ENCODE measurements at regions of chr1 and their contacts with region 1.

Region 1: GRCh38 chr1:16946646-16947045 is 24.9 kb downstream of the CROCC start:
- DNase-seq: no peak
- H3K4me3 ChIP-seq: no peak overlapping the region
- H3K4me3 Mint-ChIP-seq: no peak overlapping the region
- H3K27ac ChIP-seq: no peak overlapping the region
- H3K27ac Mint-ChIP-seq: no peak overlapping the region
- H3K4me1 ChIP-seq: peaks cover under 1% of the 10 kb centered on the region
- H3K4me1 Mint-ChIP-seq: peaks cover 0 to 3% (median under 1%) of the 10 kb centered on the region in 4 donors
- H3K27me3 ChIP-seq: no peaks in the 10 kb centered on the region
- H3K27me3 Mint-ChIP-seq: no peaks in the 10 kb centered on the region

Region 2: GRCh38 chr1:16621300-16621658 is 325.4 kb before region 1 on chr1:
- CTCF ChIA-PET with region 1: interaction called, 26 read pairs
- POLR2A ChIA-PET with region 1: no interaction called
- intact Hi-C with region 1: loop called (anchors 1 kb)
- DNase-seq: no peak
- H3K4me3 ChIP-seq: no peak overlapping the region
- H3K4me3 Mint-ChIP-seq: no peak overlapping the region
- H3K27ac ChIP-seq: no peak overlapping the region
- H3K27ac Mint-ChIP-seq: no peak overlapping the region
- H3K4me1 ChIP-seq: no peaks in the 10 kb centered on the region
- H3K4me1 Mint-ChIP-seq: peaks cover 0 to 3% (median 0%) of the 10 kb centered on the region in 4 donors
- H3K27me3 ChIP-seq: no peaks in the 10 kb centered on the region
- H3K27me3 Mint-ChIP-seq: no peaks in the 10 kb centered on the region

Region 3: DNA sequence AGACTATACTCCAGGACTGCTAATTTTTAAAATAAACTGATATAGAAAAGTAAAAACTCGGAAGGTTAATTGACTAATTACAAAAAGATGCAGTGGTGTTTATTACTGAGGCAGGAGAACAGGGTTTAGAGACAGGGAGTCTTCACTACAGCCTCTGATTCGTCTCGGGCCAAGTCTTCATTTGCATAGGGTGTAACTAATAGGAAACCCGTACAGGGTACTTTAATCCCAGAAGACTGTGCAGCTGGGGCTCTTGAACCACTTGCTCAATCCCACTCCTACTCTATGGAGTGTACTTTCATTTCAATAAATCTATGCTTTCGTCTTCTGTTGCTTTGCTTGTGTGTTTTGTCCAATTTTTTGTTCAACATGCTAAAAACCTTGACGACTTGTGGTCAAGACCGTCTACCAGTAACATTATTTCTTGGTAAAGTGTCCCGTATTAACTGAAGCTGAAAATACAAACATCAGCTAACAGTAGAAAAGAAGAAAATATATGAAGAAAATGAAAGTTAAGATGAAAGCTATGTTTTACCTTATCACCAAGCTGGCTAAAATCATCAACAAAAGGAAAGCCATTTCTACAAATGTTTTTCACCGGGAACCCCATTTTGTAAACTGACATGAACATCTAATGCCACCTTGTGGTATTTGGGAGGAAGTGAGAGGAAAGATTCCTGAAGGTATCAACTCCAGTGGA is 99.1 kb after region 1 on chr1:
- CTCF ChIA-PET with region 1: interaction called, 35 read pairs
- POLR2A ChIA-PET with region 1: no interaction called
- intact Hi-C with region 1: loop called (anchors 1 kb)
- DNase-seq: peak in 4 of 5 donors; percentile 29 to 39 (median 35)
- H3K4me3 ChIP-seq: no peak overlapping the region
- H3K4me3 Mint-ChIP-seq: peak overlapping the region in 3 of 8 donors; percentile 36 to 64 (median 46)
- H3K27ac ChIP-seq: no peak overlapping the region
- H3K27ac Mint-ChIP-seq: peak overlapping the region in 5 of 7 donors; percentile 51 to 86 (median 81)
- H3K4me1 ChIP-seq: peaks cover 5% of the 10 kb centered on the region
- H3K4me1 Mint-ChIP-seq: peaks cover 13 to 21% (median 16%) of the 10 kb centered on the region in 4 donors
- H3K27me3 ChIP-seq: no peaks in the 10 kb centered on the region
- H3K27me3 Mint-ChIP-seq: no peaks in the 10 kb centered on the region

Region 4: DNA sequence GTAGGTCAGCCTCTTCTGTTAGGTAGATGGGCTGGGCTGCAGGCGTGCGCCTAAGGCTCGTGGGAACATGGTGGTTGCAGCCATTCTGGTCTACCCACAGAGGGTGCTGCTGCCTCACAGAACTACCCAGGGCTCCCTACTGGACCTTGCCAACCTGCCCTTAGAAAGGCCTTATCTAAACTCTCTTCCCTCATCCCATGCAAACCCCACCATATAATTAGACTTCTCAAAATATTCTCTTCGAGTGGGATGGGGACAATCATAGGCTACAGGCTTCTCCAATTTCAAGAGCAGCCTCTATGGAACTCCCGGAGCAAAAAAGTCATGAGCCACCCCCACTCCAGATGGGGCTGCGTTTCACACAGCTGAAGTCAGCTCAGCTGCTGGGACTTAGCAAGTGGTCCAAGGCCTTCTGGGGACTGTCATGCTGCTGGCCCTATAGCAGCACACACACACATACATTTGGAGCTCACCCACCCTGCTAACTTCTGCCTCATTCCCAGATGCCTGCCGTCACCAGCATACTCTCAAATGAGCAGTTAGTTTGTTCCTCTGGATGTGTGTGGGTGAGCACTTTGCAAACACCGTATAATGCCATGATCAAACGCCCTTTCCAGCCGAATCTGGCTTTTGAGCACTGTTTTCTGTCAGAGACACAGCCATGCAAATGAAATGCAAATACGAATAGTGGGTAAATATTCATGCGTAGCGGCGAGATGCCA is 113.3 kb after region 1 on chr1:
- CTCF ChIA-PET with region 1: no interaction called
- POLR2A ChIA-PET with region 1: no interaction called
- intact Hi-C with region 1: no loop called
- DNase-seq: peak in 4 of 5 donors; percentile 24 to 40 (median 30)
- H3K4me3 ChIP-seq: no peak overlapping the region
- H3K4me3 Mint-ChIP-seq: no peak overlapping the region
- H3K27ac ChIP-seq: no peak overlapping the region
- H3K27ac Mint-ChIP-seq: peak overlapping the region in 1 of 7 donors; percentile 8
- H3K4me1 ChIP-seq: no peaks in the 10 kb centered on the region
- H3K4me1 Mint-ChIP-seq: peaks cover 0 to 4% (median 0%) of the 10 kb centered on the region in 4 donors
- H3K27me3 ChIP-seq: no peaks in the 10 kb centered on the region
- H3K27me3 Mint-ChIP-seq: peaks cover 5 to 6% of the 10 kb centered on the region in 2 donors

Region 5: GRCh38 chr1:17236779-17237560 is 290.3 kb after region 1 on chr1:
- CTCF ChIA-PET with region 1: interaction called, 4 read pairs
- POLR2A ChIA-PET with region 1: no interaction called
- intact Hi-C with region 1: loop called (anchors 2 kb)
- DNase-seq: peak; percentile 69 to 79 (median 74)
- H3K4me3 ChIP-seq: no peak overlapping the region
- H3K4me3 Mint-ChIP-seq: no peak overlapping the region
- H3K27ac ChIP-seq: no peak overlapping the region
- H3K27ac Mint-ChIP-seq: peak overlapping the region in 1 of 7 donors; percentile 73
- H3K4me1 ChIP-seq: no peaks in the 10 kb centered on the region
- H3K4me1 Mint-ChIP-seq: peaks cover 0 to 9% (median 0%) of the 10 kb centered on the region in 4 donors
- H3K27me3 ChIP-seq: no peaks in the 10 kb centered on the region
- H3K27me3 Mint-ChIP-seq: peaks cover 2 to 3% of the 10 kb centered on the region in 2 donors

Measured in CD4-positive, alpha-beta memory T cell (primary cell).